Activated naive CD4-positive, alpha-beta T cell treated with anti-CD3 and anti-CD28 coated beads for 36 hours (primary cell): ENCODE measurements at regions of chr15 and their contacts with region 1.

Region 1: GRCh38 chr15:44536962-44537734 is at the start of gene EIF3J:
- DNase-seq: peak; percentile 96
- H3K4me3 Mint-ChIP-seq: peak within 1 kb of the TSS; percentile 84
- H3K27ac Mint-ChIP-seq: peak within 1 kb of the TSS; percentile 95
- H3K4me1 Mint-ChIP-seq: peaks cover 48% of the 10 kb centered on the region
- H3K27me3 Mint-ChIP-seq: no peaks in the 10 kb centered on the region
- total RNA-seq, gene EIF3J: 75.8 to 77.9 TPM

Region 2: DNA sequence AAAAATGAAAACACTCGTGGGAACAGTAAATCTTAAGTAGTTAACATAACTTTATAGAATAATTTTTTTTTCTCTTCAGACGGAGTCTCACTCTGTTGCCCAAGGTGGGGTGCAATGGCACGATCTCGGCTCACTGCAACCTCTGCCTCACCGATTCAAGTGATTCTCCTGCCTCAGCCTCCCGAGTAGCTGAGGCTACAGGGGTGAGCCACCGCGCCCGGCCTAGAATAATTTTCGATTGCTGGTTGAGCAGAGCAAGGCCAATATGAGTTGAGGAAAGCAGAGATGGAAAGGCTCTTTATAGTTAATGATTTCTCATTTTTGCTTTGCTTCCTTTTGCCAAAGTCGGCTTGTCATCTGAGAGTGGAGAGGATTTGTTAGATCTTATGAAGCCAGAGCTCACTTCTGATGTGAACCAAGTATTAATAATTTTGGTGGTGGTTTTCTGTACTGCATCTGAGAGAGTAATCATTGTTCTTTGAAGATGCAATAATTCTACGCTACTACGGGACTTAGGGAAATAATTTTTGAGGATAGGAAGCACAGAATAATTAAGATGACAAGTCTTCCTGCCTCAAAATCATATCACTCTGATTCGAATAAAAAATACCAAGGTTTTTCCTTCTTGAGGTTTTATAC is 250.2 kb before region 1 on chr15:
- CTCF ChIA-PET with region 1: no interaction called
- intact Hi-C with region 1: loop called (anchors 1 kb)
- DNase-seq: no peak
- H3K4me3 Mint-ChIP-seq: peak overlapping the region; percentile 88
- H3K27ac Mint-ChIP-seq: peak overlapping the region; percentile 94
- H3K4me1 Mint-ChIP-seq: peaks cover 36% of the 10 kb centered on the region
- H3K27me3 Mint-ChIP-seq: no peaks in the 10 kb centered on the region

Region 3: DNA sequence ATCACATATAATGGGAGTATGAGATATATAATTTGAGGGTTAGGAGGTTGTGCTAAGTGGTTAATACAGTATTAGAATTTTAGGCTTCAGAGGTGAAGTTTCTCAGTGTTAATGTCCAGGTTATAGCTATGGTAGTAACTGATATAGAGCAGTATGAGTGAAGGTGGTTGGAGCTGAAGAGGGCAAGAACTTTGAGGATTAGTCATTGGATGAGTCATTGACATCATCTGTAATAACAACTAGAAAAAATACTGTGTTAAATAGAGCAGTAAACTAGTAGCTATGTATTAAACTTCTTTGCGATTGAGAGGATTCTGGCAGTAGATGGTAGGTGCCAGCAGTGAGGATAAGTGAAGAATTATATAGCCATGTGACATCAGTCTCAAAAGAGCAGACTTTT is 47.7 kb before region 1 on chr15:
- CTCF ChIA-PET with region 1: no interaction called
- intact Hi-C with region 1: loop called (anchors 2 kb)
- DNase-seq: no peak
- H3K4me3 Mint-ChIP-seq: no peak overlapping the region
- H3K27ac Mint-ChIP-seq: no peak overlapping the region
- H3K4me1 Mint-ChIP-seq: peaks cover 41% of the 10 kb centered on the region
- H3K27me3 Mint-ChIP-seq: no peaks in the 10 kb centered on the region

Region 4: DNA sequence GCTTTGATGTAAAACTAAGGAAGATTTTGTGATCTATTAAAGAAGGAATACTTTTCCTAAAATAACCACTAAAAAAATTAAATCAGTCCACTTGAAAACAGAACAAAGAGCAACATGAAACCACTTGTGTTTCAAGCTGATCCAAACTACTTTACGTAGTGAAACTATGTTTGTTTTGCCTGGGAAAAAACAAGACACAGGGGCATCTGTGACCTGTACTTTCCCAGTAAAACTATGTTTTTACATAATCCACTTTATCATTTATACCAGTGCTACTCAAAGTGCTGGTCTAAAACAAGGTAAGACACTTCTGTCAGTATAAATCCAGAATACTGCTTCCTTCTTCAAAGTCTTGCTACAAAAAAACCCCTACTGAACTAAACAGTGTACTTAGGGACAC is 69.6 kb after region 1 on chr15:
- CTCF ChIA-PET with region 1: no interaction called
- intact Hi-C with region 1: no loop called
- DNase-seq: no peak
- H3K4me3 Mint-ChIP-seq: no peak overlapping the region
- H3K27ac Mint-ChIP-seq: no peak overlapping the region
- H3K4me1 Mint-ChIP-seq: no peaks in the 10 kb centered on the region
- H3K27me3 Mint-ChIP-seq: no peaks in the 10 kb centered on the region